ENCODE measurements at regions of chr3 and their contacts with region 1.

Region 1: DNA sequence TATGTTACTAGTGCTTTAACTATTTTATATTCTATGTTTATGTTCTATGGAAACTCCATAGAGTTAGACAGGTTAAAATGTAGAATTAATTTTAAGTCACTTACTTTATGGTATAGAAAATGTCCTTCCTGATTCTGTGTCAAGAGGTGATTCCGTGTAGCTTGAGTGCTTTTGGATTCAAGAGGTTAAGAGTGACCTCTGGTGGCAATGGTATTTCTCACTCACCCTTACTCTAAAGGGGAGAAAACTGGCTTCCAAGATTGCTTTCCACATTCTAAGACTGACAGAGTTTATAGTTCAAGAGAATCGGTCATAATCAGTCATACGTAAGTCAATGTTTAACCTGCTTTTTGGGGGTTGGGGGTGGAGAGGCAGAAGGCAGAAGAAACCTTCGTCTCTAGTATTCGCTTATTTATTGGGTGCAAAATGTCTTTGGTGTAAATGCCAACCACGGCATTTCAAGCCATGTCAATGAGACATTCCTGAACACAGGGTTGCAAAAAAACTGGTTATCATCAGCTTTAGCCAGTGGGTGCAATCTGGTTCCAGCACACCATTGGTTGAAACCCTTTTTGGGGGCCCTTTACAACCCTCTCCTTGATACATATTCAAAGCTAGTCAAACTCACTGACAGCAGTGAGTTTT is 92.0 kb upstream of the VGLL3 start:
- DNase-seq: no peak
- ATAC-seq: peak in 3 of 4 donors; percentile 40 to 76 (median 57)
- H3K4me3 ChIP-seq: no peak overlapping the region
- H3K27ac ChIP-seq: no peak overlapping the region
- H3K4me1 ChIP-seq: no peaks in the 10 kb centered on the region
- H3K27me3 ChIP-seq: no peaks in the 10 kb centered on the region
- CTCF ChIP-seq: peak; percentile 51

Region 2: GRCh38 chr3:86774082-86774691 is 308.7 kb before region 1 on chr3:
- intact Hi-C with region 1: loop called (anchors 2 to 5 kb)
- DNase-seq: no peak
- ATAC-seq: no peak
- H3K4me3 ChIP-seq: no peak overlapping the region
- H3K27ac ChIP-seq: no peak overlapping the region
- H3K4me1 ChIP-seq: no peaks in the 10 kb centered on the region
- H3K27me3 ChIP-seq: no peaks in the 10 kb centered on the region
- CTCF ChIP-seq: peak; percentile 56

Region 3: GRCh38 chr3:86969500-86970189 is 113.3 kb before region 1 on chr3:
- intact Hi-C with region 1: loop called in 1 of 2 experiments (anchors 10 kb)
- DNase-seq: no peak
- ATAC-seq: no peak
- H3K4me3 ChIP-seq: no peak overlapping the region
- H3K27ac ChIP-seq: no peak overlapping the region
- H3K4me1 ChIP-seq: no peaks in the 10 kb centered on the region
- H3K27me3 ChIP-seq: no peaks in the 10 kb centered on the region
- CTCF ChIP-seq: peak; percentile 47

Region 4: GRCh38 chr3:87247430-87247773 is 164.5 kb after region 1 on chr3:
- intact Hi-C with region 1: no loop called
- DNase-seq: no peak
- ATAC-seq: no peak
- H3K4me3 ChIP-seq: no peak overlapping the region
- H3K27ac ChIP-seq: no peak overlapping the region
- H3K4me1 ChIP-seq: no peaks in the 10 kb centered on the region
- H3K27me3 ChIP-seq: no peaks in the 10 kb centered on the region
- CTCF ChIP-seq: no peak

Measured in psoas muscle (tissue), 8 donors.